ENCODE measurements at regions of chr15 and their contacts with region 1.

Region 1: GRCh38 chr15:64548235-64548634 is 87.9 kb downstream of the ZNF609 start:
- DNase-seq: no peak
- H3K4me3 ChIP-seq: no peak overlapping the region
- H3K27ac ChIP-seq: no peak overlapping the region
- H3K4me1 ChIP-seq: no peaks in the 10 kb centered on the region
- H3K27me3 ChIP-seq: no peaks in the 10 kb centered on the region
- CTCF ChIP-seq: no peak
- POLR2A ChIP-seq: no peak

Region 2: GRCh38 chr15:64901914-64902313 is 353.7 kb after region 1 on chr15:
- intact Hi-C with region 1: loop called (anchors 5 kb)
- DNase-seq: no peak
- H3K4me3 ChIP-seq: no peak overlapping the region
- H3K27ac ChIP-seq: no peak overlapping the region
- H3K4me1 ChIP-seq: peaks cover 0 to 4% of the 10 kb centered on the region in 2 donors
- H3K27me3 ChIP-seq: no peaks in the 10 kb centered on the region
- CTCF ChIP-seq: no peak
- POLR2A ChIP-seq: no peak

Measured in breast epithelium (tissue), 4 donors.